ENCODE measurements at regions of chr6 and their contacts with region 1.

Region 1: DNA sequence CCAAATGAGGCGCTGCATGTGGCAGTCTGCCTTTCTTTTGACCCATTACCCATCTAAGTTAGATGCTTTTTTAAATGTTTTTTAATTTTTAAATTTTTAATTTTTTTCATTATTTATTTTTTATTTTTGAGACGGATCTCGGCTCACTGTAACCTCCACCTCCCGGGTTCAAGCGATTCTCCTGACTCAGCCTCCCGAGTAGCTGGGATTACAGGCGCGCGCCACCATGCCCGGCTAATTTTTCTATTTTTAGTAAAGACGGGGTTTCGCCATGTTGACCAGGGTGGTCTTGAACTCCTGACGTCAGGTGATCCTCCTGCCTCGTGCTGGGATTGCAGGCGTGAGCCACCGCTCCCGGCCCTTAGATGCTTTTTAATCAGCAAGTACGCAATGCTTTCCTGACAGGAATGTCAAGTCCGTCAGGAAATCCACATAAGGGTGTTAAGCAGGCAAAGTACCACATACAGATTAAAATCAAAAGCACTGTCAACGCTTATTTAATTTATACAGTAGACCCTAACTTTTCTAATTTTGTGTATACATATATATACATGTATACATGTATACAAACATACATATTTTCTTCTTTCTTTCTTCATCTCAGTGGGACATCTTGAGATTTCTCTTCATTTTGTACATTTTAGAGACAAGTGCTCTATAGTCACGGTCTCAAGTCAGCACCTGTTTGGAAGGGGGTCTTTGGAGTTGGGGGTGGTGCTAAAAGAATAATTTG is 995 bp upstream of the GSTA4 start:
- DNase-seq: peak; percentile 65
- ATAC-seq: no peak

Region 2: DNA sequence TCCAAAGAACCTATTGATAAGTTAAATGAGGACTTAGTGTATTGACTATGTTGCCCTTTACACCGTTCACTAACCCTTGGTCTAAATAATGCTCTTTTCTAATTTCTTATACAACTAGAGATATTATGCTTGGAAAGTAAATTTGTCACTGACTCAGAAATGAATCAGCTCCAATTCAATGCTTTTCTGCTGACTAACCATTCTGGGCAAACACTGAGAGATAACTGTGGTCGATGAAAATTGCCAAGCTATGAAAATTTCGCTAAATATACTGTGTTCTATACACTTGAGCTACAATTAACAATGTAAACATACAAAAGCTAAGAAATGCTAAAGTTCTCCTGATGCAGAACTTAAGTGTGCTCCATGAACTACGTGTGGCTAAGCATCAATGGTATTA is 46.0 kb after region 1 on chr6:
- intact Hi-C with region 1: loop called (anchors 5 kb)
- DNase-seq: no peak
- ATAC-seq: no peak

Region 3: GRCh38 chr6:53064726-53065215 is 68.7 kb after region 1 on chr6:
- intact Hi-C with region 1: loop called (anchors 2 kb)
- DNase-seq: peak; percentile 98
- ATAC-seq: peak; percentile 92

Measured in Right ventricle myocardium superior (tissue), 1 donor.